CD4-positive, alpha-beta memory T cell (primary cell): ENCODE measurements at regions of chr3 and their contacts with region 1.

Region 1: GRCh38 chr3:52934630-52935530 is 37.5 kb upstream of the STIMATE start:
- DNase-seq: peak; percentile 49 to 55 (median 49)
- H3K4me3 ChIP-seq: no peak overlapping the region
- H3K4me3 Mint-ChIP-seq: peak overlapping the region in 6 of 8 donors; percentile 3 to 52 (median 26)
- H3K27ac ChIP-seq: no peak overlapping the region
- H3K27ac Mint-ChIP-seq: peak overlapping the region; percentile 49 to 89 (median 84)
- H3K4me1 ChIP-seq: peaks cover 11% of the 10 kb centered on the region
- H3K4me1 Mint-ChIP-seq: peaks cover 10 to 17% (median 14%) of the 10 kb centered on the region in 4 donors
- H3K27me3 ChIP-seq: no peaks in the 10 kb centered on the region
- H3K27me3 Mint-ChIP-seq: no peaks in the 10 kb centered on the region

Region 2: DNA sequence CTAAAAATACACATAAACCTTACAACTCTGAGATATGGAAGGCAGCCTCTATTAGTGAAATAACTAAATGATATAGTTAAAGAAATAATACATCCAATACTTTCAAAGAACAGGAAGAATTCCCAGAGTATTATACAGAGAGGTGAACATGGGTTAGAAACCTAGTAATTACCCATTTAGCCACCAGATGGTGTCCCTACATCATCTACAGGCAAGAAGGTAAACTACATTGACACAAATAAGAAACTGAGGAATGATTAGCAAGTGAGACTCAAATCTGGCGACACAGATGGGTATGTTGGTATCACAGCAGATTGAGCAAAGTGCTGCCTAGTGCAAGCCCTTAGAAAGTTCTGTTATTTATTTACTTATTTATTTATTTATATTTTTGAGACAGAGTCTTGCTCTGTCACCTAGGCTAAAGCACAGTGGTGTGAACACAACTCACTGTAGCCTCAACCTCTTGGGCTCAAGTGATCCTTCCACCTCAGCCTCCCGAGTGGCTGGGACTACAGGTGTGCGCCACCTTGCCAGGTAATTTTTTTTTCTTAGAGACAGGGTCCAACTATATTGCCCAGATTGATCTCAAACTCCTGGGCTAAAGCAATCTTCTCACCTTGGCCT is 192.3 kb before region 1 on chr3:
- CTCF ChIA-PET with region 1: interaction called, 5 read pairs
- POLR2A ChIA-PET with region 1: no interaction called
- intact Hi-C with region 1: loop called (anchors 2 kb)
- DNase-seq: peak in 4 of 5 donors; percentile 16 to 33 (median 27)
- H3K4me3 ChIP-seq: no peak overlapping the region
- H3K4me3 Mint-ChIP-seq: no peak overlapping the region
- H3K27ac ChIP-seq: no peak overlapping the region
- H3K27ac Mint-ChIP-seq: no peak overlapping the region
- H3K4me1 ChIP-seq: no peaks in the 10 kb centered on the region
- H3K4me1 Mint-ChIP-seq: no peaks in the 10 kb centered on the region
- H3K27me3 ChIP-seq: no peaks in the 10 kb centered on the region
- H3K27me3 Mint-ChIP-seq: no peaks in the 10 kb centered on the region

Region 3: GRCh38 chr3:53030619-53031449 is 96.0 kb after region 1 on chr3:
- CTCF ChIA-PET with region 1: interaction called, 11 read pairs
- POLR2A ChIA-PET with region 1: interaction called, 6 read pairs
- intact Hi-C with region 1: no loop called
- DNase-seq: peak; percentile 35 to 70 (median 53)
- H3K4me3 ChIP-seq: no peak overlapping the region
- H3K4me3 Mint-ChIP-seq: peak overlapping the region; percentile 45 to 78 (median 74)
- H3K27ac ChIP-seq: peak overlapping the region; percentile 16
- H3K27ac Mint-ChIP-seq: peak overlapping the region; percentile 52 to 95 (median 90)
- H3K4me1 ChIP-seq: peaks cover 61% of the 10 kb centered on the region
- H3K4me1 Mint-ChIP-seq: peaks cover 34 to 78% (median 57%) of the 10 kb centered on the region in 4 donors
- H3K27me3 ChIP-seq: no peaks in the 10 kb centered on the region
- H3K27me3 Mint-ChIP-seq: no peaks in the 10 kb centered on the region

Region 4: GRCh38 chr3:53130179-53131061 is 195.5 kb after region 1 on chr3 and contains the start of gene RFT1:
- CTCF ChIA-PET with region 1: no interaction called
- POLR2A ChIA-PET with region 1: no interaction called
- intact Hi-C with region 1: no loop called
- DNase-seq: peak; percentile 96 to 98 (median 97)
- H3K4me3 ChIP-seq: peak within 1 kb of the TSS; percentile 66 to 77
- H3K4me3 Mint-ChIP-seq: peak within 1 kb of the TSS; percentile 88 to 93 (median 91)
- H3K27ac ChIP-seq: peak within 1 kb of the TSS; percentile 83
- H3K27ac Mint-ChIP-seq: peak within 1 kb of the TSS; percentile 96 to 100 (median 99)
- H3K4me1 ChIP-seq: peaks cover 20% of the 10 kb centered on the region
- H3K4me1 Mint-ChIP-seq: peaks cover 18 to 31% (median 25%) of the 10 kb centered on the region in 4 donors
- H3K27me3 ChIP-seq: no peaks in the 10 kb centered on the region
- H3K27me3 Mint-ChIP-seq: no peaks in the 10 kb centered on the region
- total RNA-seq, gene RFT1: 25.3 to 28.4 TPM

Region 5: DNA sequence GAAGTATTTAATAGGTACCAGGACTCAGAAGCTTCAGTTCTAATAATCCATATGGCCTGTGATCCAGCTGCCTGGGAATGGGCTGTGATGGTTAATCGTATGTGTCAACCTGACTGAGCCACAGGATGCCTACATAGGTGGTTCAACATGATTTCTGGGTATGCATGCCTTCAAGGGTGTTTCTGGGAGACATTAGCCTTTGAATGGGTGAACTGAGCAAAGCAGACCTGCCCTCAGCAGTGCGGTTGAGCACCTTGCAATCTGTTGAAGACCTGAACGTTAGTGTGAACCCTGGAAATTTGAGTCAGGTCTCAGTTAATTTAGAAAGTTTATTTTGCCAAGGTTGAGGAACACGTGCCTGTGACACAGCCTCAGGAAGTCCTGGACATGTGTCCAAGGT is 343.8 kb after region 1 on chr3:
- CTCF ChIA-PET with region 1: no interaction called
- POLR2A ChIA-PET with region 1: no interaction called
- intact Hi-C with region 1: no loop called
- DNase-seq: no peak
- H3K4me3 ChIP-seq: no peak overlapping the region
- H3K4me3 Mint-ChIP-seq: no peak overlapping the region
- H3K27ac ChIP-seq: no peak overlapping the region
- H3K27ac Mint-ChIP-seq: no peak overlapping the region
- H3K4me1 ChIP-seq: no peaks in the 10 kb centered on the region
- H3K4me1 Mint-ChIP-seq: peaks cover 0 to 6% (median 2%) of the 10 kb centered on the region in 4 donors
- H3K27me3 ChIP-seq: no peaks in the 10 kb centered on the region
- H3K27me3 Mint-ChIP-seq: no peaks in the 10 kb centered on the region

Region 6: DNA sequence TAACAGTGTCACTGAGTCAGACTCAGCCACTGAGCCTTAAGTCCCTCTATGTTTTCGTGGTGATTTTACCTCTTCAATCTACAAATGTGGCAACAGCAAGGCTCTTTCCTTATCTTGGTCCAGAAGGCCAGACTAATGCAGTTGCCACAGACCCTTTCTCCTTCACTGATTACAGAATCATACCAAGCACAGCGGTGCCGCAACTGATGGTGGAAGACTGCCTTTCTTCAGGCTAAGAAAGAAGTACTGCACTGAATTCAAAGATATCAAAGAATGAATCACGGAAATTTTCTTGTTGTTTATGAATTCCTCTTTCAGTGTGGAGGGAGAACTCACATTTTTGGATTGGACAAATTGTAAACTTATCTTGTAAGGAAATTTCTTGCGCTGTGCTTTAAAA is 393.9 kb after region 1 on chr3:
- CTCF ChIA-PET with region 1: no interaction called
- POLR2A ChIA-PET with region 1: no interaction called
- intact Hi-C with region 1: no loop called
- DNase-seq: no peak
- H3K4me3 ChIP-seq: no peak overlapping the region
- H3K4me3 Mint-ChIP-seq: no peak overlapping the region
- H3K27ac ChIP-seq: no peak overlapping the region
- H3K27ac Mint-ChIP-seq: peak overlapping the region in 1 of 7 donors; percentile 27
- H3K4me1 ChIP-seq: peaks cover 9% of the 10 kb centered on the region
- H3K4me1 Mint-ChIP-seq: peaks cover 23 to 42% (median 28%) of the 10 kb centered on the region in 4 donors
- H3K27me3 ChIP-seq: no peaks in the 10 kb centered on the region
- H3K27me3 Mint-ChIP-seq: no peaks in the 10 kb centered on the region